CD8-positive, alpha-beta T cell (primary cell): ENCODE measurements at regions of chr6 and their contacts with region 1.

Region 1: GRCh38 chr6:41027799-41028628 is 11.0 kb downstream of the UNC5CL start:
- DNase-seq: peak; percentile 39 to 87 (median 73)
- ATAC-seq: peak; percentile 87
- H3K4me3 ChIP-seq: peak overlapping the region; percentile 65 to 67
- H3K4me3 Mint-ChIP-seq: peak overlapping the region; percentile 84
- H3K27ac ChIP-seq: peak overlapping the region; percentile 35 to 76
- H3K27ac Mint-ChIP-seq: peak overlapping the region; percentile 74
- H3K4me1 ChIP-seq: peaks cover 19% of the 10 kb centered on the region
- H3K4me1 Mint-ChIP-seq: peaks cover 21% of the 10 kb centered on the region
- H3K27me3 ChIP-seq: no peaks in the 10 kb centered on the region
- H3K27me3 Mint-ChIP-seq: no peaks in the 10 kb centered on the region
- CTCF ChIP-seq: peak; percentile 99

Region 2: DNA sequence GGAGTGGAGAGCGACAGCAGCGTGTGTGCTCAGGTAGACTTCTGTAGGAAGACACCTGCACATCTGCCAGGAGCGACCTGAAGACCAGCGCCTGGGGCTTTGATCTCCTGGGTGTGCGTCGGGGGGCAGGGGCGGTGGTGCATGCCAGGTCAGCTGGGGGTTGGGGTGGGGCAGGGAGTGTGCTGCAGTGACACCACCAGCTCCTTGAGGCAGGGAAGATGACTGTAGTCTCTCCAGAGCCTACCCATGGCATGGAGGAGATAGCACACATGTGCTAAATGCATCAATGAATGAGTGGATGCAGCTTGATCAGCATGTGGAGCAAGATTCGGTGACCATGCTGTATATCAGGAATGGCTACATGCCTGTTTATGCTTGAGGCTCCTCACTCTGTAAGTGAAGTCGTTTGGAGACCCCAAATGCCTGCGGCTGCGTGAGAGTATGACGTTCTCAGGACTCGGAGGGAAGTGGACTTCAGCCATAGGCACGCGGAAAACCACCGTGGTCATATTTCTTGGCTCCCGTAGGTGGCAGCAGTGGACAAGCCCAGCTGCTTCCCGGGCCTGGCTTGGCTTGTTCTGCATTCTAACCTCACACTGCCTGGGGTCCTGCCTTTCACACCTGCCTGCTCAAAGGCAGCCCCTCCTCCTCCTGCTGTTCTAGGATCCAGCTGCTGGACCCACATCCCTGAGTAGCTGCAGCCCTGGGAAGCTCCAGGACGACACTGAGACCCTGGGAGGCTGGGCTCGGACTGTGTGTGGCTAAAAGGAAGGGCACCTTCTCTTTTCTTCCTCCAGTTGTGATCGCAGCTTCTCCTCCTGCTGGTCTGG is 1666.1 kb before region 1 on chr6:
- CTCF ChIA-PET with region 1: no interaction called
- POLR2A ChIA-PET with region 1: no interaction called
- intact Hi-C with region 1: loop called in 1 of 2 experiments (anchors 5 kb)
- DNase-seq: peak in 7 of 9 experiments; percentile 14 to 58 (median 36)
- ATAC-seq: peak; percentile 36
- H3K4me3 ChIP-seq: no peak overlapping the region
- H3K4me3 Mint-ChIP-seq: no peak overlapping the region
- H3K27ac ChIP-seq: no peak overlapping the region
- H3K27ac Mint-ChIP-seq: no peak overlapping the region
- H3K4me1 ChIP-seq: peaks cover 3% of the 10 kb centered on the region
- H3K4me1 Mint-ChIP-seq: peaks cover 2% of the 10 kb centered on the region
- H3K27me3 ChIP-seq: no peaks in the 10 kb centered on the region
- H3K27me3 Mint-ChIP-seq: peaks cover 10% of the 10 kb centered on the region
- CTCF ChIP-seq: peak; percentile 47

Region 3: GRCh38 chr6:40328405-40328987 is 699.5 kb before region 1 on chr6:
- CTCF ChIA-PET with region 1: no interaction called
- POLR2A ChIA-PET with region 1: no interaction called
- intact Hi-C with region 1: loop called (anchors 2 to 5 kb)
- DNase-seq: peak in 6 of 9 experiments; percentile 12 to 65 (median 48)
- ATAC-seq: no peak
- H3K4me3 ChIP-seq: no peak overlapping the region
- H3K4me3 Mint-ChIP-seq: no peak overlapping the region
- H3K27ac ChIP-seq: no peak overlapping the region
- H3K27ac Mint-ChIP-seq: no peak overlapping the region
- H3K4me1 ChIP-seq: no peaks in the 10 kb centered on the region
- H3K4me1 Mint-ChIP-seq: no peaks in the 10 kb centered on the region
- H3K27me3 ChIP-seq: no peaks in the 10 kb centered on the region
- H3K27me3 Mint-ChIP-seq: peaks cover 20% of the 10 kb centered on the region
- CTCF ChIP-seq: peak; percentile 60

Region 4: DNA sequence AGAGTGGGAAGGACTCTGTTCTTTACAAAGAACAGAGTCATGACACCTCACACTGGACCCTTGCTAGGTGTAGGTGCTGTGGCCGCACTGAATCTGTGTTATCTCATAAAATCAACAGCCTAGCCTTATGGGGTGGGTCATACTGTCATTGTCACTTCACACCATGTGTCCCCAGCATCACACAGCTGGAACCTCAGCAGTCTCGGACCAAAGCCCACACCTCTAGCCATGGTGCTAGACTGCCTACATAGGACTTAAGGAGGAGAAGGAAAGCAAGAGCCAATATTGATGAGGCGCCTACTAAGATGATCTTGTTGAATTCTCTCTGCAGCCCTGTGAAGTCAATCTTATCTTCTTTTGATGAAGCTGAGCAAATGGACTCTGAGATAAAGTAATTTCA is 20.0 kb before region 1 on chr6:
- CTCF ChIA-PET with region 1: interaction called, 25 read pairs
- POLR2A ChIA-PET with region 1: no interaction called
- intact Hi-C with region 1: loop called (anchors 1 kb)
- DNase-seq: no peak
- ATAC-seq: no peak
- H3K4me3 ChIP-seq: no peak overlapping the region
- H3K4me3 Mint-ChIP-seq: no peak overlapping the region
- H3K27ac ChIP-seq: no peak overlapping the region
- H3K27ac Mint-ChIP-seq: no peak overlapping the region
- H3K4me1 ChIP-seq: no peaks in the 10 kb centered on the region
- H3K4me1 Mint-ChIP-seq: no peaks in the 10 kb centered on the region
- H3K27me3 ChIP-seq: peaks cover 0 to 4% of the 10 kb centered on the region in 2 experiments
- H3K27me3 Mint-ChIP-seq: peaks cover 14% of the 10 kb centered on the region
- CTCF ChIP-seq: no peak

Region 5: GRCh38 chr6:41039060-41039998 is 11.3 kb after region 1 on chr6 and contains the start of gene UNC5CL:
- CTCF ChIA-PET with region 1: interaction called, 29 read pairs
- POLR2A ChIA-PET with region 1: interaction called, 5 read pairs
- intact Hi-C with region 1: no loop called
- DNase-seq: peak; percentile 16 to 62 (median 56)
- ATAC-seq: peak; percentile 62
- H3K4me3 ChIP-seq: no peak within 1 kb of the TSS
- H3K4me3 Mint-ChIP-seq: no peak within 1 kb of the TSS
- H3K27ac ChIP-seq: no peak within 1 kb of the TSS
- H3K27ac Mint-ChIP-seq: no peak within 1 kb of the TSS
- H3K4me1 ChIP-seq: no peaks in the 10 kb centered on the region
- H3K4me1 Mint-ChIP-seq: no peaks in the 10 kb centered on the region
- H3K27me3 ChIP-seq: no peaks in the 10 kb centered on the region
- H3K27me3 Mint-ChIP-seq: no peaks in the 10 kb centered on the region
- CTCF ChIP-seq: peak; percentile 55
- total RNA-seq, gene UNC5CL: 1.4 to 2.3 TPM

Region 6: DNA sequence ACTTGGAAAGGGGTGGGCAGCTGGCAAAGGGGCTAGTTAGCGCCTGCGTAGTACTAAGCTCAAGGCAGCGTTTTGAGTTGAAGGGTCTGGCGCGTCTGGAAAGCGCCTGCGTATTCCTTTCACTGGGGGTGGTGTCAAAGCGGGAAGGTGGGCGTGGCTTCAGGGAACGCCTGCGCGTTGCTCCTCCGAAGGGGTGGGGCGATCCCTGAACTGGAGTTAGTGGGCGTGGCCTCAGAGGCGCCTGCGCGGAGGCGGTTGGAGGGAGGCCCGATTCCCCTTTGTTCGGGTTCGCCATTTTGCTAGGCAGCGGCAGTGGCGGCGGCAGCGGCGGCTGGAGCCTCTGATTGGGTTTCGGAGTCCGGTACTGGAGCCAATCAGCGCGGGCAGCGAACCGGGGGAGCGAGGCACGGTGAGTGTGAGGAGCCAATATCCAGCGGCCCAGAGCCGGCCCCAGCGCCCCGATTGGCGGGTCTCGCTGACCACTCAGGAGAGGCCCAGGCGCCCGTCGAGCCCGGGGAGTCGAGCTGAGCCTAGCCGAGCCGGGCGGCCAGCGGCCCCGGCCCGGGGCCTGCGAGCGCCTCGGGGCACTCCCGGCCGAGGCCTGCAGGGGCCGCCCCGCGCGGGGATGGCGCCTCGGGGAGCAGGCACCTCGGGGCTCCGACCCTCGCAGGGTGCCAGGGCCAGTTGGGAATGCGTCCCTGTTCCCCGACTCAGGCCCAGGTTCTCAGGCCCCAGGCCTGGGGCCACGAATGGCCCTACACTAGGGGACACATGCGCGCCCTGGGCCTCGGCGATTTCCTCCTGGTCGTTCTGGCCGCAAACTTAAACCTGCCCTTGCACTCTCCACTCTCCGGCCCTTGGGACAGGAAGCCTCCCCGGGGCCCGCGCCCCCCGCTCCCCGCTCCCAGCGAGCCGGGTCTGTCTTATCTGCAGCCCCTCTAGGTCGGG is 44.9 kb after region 1 on chr6 and contains the start of gene NFYA:
- CTCF ChIA-PET with region 1: interaction called, 11 read pairs
- POLR2A ChIA-PET with region 1: interaction called, 11 read pairs
- intact Hi-C with region 1: loop called in 1 of 2 experiments (anchors 2 kb)
- DNase-seq: peak; percentile 99 to 100 (median 100)
- ATAC-seq: peak; percentile 70
- H3K4me3 ChIP-seq: peak within 1 kb of the TSS; percentile 72 to 86
- H3K4me3 Mint-ChIP-seq: peak within 1 kb of the TSS; percentile 92
- H3K27ac ChIP-seq: peak within 1 kb of the TSS; percentile 88 to 89
- H3K27ac Mint-ChIP-seq: peak within 1 kb of the TSS; percentile 95
- H3K4me1 ChIP-seq: peaks cover 37% of the 10 kb centered on the region
- H3K4me1 Mint-ChIP-seq: peaks cover 55% of the 10 kb centered on the region
- H3K27me3 ChIP-seq: no peaks in the 10 kb centered on the region
- H3K27me3 Mint-ChIP-seq: no peaks in the 10 kb centered on the region
- CTCF ChIP-seq: peak; percentile 46
- total RNA-seq, gene NFYA: 31.7 to 32.7 TPM

Region 7: GRCh38 chr6:41200296-41200900 is 172.4 kb after region 1 on chr6:
- CTCF ChIA-PET with region 1: no interaction called
- POLR2A ChIA-PET with region 1: no interaction called
- intact Hi-C with region 1: no loop called
- DNase-seq: peak; percentile 28 to 85 (median 65)
- ATAC-seq: peak; percentile 76
- H3K4me3 ChIP-seq: peak overlapping the region; percentile 17 to 24
- H3K4me3 Mint-ChIP-seq: peak overlapping the region; percentile 66
- H3K27ac ChIP-seq: peak overlapping the region; percentile 78 to 98
- H3K27ac Mint-ChIP-seq: peak overlapping the region; percentile 93
- H3K4me1 ChIP-seq: peaks cover 52% of the 10 kb centered on the region
- H3K4me1 Mint-ChIP-seq: peaks cover 72% of the 10 kb centered on the region
- H3K27me3 ChIP-seq: no peaks in the 10 kb centered on the region
- H3K27me3 Mint-ChIP-seq: no peaks in the 10 kb centered on the region
- CTCF ChIP-seq: no peak